WTC11 (cell line): ENCODE measurements at regions of chr1 and their contacts with region 1.

Region 1: GRCh38 chr1:223670458-223671168 is 5.1 kb upstream of the CAPN8 start:
- DNase-seq: peak; percentile 66
- ATAC-seq: peak; percentile 97
- H3K4me3 Mint-ChIP-seq: no peak overlapping the region
- H3K27ac Mint-ChIP-seq: no peak overlapping the region
- H3K4me1 Mint-ChIP-seq: peaks cover 3% of the 10 kb centered on the region; the same call in 1 of the 2 replicates
- H3K27me3 Mint-ChIP-seq: peaks cover 10% of the 10 kb centered on the region
- CTCF ChIP-seq: peak; percentile 63; the same call in 1 of the 2 replicates

Region 2: DNA sequence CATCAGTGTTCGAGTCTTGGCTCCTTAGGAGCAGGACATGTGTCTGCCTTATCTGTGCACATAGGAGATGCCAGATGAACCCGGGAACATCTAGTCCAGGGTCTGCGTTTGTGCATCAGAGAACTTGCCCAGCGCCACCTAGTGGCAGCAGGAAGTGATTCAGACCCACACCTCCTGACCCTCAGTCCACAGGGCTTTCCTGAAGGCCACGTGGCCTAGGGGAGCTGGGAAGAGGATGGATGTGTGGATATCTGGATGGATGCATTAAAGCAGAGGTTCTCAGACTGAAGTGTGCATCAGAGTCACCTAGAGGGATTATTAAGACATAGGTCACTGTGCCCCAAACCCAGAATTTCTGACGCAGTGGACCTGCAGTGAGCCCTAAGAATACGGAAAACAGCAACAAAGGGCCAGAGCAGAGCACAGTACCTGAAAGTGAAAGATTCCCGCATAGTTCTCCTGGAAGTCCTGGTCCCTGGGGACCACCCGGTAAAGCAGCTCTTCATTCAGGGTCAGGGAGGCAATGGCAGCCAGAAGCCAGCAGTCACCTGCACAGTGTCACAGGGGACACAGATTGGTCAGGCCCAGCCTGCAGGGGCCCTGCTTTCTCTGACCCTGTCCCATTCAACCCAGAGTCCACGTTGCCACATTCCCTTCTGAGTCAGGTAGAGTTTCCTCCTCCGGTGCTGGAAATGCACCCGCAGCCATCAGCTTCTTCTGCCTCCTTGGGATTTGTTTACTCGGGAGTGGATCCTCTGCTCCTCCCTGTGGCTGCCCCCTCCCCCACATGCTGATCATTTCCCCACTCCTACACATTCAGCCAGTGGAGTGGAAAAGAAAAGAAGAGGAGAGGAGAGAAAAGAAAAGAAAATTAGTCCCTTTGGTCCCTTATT is 42.1 kb before region 1 on chr1:
- CTCF ChIA-PET with region 1: interaction called, 14 read pairs
- POLR2A ChIA-PET with region 1: no interaction called
- DNase-seq: peak; percentile 72
- ATAC-seq: peak; percentile 95
- H3K4me3 Mint-ChIP-seq: no peak overlapping the region
- H3K27ac Mint-ChIP-seq: no peak overlapping the region
- H3K4me1 Mint-ChIP-seq: no peaks in the 10 kb centered on the region
- H3K27me3 Mint-ChIP-seq: no peaks in the 10 kb centered on the region
- CTCF ChIP-seq: peak; percentile 89

Region 3: GRCh38 chr1:223652436-223652941 is 18.1 kb before region 1 on chr1:
- CTCF ChIA-PET with region 1: interaction called, 10 read pairs
- POLR2A ChIA-PET with region 1: no interaction called
- DNase-seq: no peak
- ATAC-seq: peak; percentile 70
- H3K4me3 Mint-ChIP-seq: no peak overlapping the region
- H3K27ac Mint-ChIP-seq: no peak overlapping the region
- H3K4me1 Mint-ChIP-seq: peaks cover 26% of the 10 kb centered on the region
- H3K27me3 Mint-ChIP-seq: peaks cover 3% of the 10 kb centered on the region; the same call in 1 of the 2 replicates
- CTCF ChIP-seq: no peak